AG04449 (cell line): ENCODE measurements at regions of chr5 and their contacts with region 1.

Region 1: GRCh38 chr5:151825445-151825844 is 53.7 kb downstream of the G3BP1 start:
- DNase-seq: peak; percentile 40
- H3K4me3 ChIP-seq: no peak overlapping the region
- CTCF ChIP-seq: peak; percentile 71

Region 2: DNA sequence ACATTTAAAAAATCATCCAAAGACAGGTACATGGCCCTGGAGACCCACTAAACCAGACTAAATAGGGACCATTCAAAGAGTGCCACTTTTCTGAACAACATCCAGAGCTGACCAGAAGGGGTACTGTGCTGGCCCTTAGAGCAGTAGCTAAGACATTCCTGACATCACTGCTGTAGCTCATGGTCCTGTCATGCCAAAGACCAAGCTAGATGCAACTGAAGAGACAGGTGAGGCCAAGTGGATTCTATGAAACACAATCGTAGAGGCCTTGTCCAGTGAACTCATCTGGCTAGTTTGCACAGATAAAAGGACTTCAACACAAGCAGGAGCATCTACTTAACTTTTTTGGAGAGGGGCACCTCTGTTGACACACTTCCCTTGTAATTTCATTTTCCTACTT is 10.4 kb before region 1 on chr5:
- CTCF ChIA-PET with region 1: interaction called, 31 read pairs
- POLR2A ChIA-PET with region 1: no interaction called
- DNase-seq: no peak
- H3K4me3 ChIP-seq: no peak overlapping the region
- CTCF ChIP-seq: no peak

Region 3: DNA sequence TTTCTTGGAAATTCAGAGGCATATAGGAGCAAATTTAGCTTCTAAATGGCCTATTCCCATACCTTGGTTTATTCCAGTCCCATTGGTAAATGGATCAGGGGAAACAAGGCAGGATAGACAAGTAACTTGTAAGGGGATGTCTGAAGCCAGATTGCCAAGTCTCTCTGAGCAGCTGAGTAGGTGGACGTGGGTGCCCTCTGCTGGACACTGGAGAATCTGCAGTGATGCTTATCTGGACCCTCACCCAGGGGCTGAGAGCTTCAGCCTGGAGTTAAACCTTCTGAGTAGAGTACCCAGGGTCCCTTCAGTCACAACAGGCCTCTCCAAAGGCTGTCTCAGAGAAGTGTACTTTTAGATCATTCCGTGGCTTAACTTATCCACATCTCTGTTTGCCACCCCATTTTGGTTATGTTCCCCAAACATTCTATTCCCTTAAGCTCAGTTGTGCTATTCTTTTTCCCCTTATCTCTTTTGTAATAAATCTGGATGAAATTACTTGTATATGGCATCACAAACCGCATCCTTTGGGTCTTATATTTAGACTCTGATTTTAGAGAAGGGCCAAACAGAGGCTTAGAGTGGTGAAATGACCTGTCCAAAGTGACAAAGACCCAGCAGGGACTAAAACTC is 317.5 kb after region 1 on chr5:
- CTCF ChIA-PET with region 1: interaction called, 477 read pairs
- POLR2A ChIA-PET with region 1: no interaction called
- DNase-seq: peak; percentile 2
- H3K4me3 ChIP-seq: no peak overlapping the region
- CTCF ChIP-seq: peak; percentile 84

Region 4: GRCh38 chr5:152505442-152506042 is 680.1 kb after region 1 on chr5:
- CTCF ChIA-PET with region 1: interaction called, 22 read pairs
- POLR2A ChIA-PET with region 1: no interaction called
- DNase-seq: no peak
- H3K4me3 ChIP-seq: no peak overlapping the region
- CTCF ChIP-seq: peak; percentile 46

Region 5: DNA sequence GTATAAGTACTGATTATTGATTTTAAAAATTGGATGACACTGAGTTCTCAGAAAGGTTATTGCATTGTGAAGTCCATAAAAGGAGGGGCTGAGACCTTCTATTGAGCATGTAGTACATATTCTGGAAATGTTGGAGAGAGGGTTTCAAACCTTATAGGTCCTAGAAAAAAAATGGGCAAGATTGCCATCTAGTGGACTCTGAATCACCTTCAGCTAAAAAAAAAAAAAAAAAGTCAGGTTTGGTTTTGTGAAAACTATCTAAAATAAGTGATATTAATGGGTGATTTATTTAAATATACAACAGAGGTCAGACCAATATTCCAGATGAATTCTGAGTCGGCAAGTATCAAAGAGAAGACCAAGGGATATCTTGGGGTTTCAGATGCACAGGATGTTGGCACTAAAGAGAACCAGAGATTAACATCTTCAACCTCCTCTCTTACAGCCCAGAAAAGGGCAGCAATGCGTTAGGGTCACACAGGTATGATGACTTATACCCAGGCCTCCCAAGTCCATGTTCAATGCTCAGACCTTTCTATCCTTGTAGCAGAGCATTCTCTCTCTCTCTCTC is 689.5 kb after region 1 on chr5:
- CTCF ChIA-PET with region 1: interaction called, 13 read pairs
- POLR2A ChIA-PET with region 1: no interaction called
- DNase-seq: no peak
- H3K4me3 ChIP-seq: no peak overlapping the region
- CTCF ChIP-seq: peak; percentile 10